Activated naive CD4-positive, alpha-beta T cell treated with anti-CD3 and anti-CD28 coated beads for 36 hours (primary cell): ENCODE measurements at regions of chr3 and their contacts with region 1.

Region 1: DNA sequence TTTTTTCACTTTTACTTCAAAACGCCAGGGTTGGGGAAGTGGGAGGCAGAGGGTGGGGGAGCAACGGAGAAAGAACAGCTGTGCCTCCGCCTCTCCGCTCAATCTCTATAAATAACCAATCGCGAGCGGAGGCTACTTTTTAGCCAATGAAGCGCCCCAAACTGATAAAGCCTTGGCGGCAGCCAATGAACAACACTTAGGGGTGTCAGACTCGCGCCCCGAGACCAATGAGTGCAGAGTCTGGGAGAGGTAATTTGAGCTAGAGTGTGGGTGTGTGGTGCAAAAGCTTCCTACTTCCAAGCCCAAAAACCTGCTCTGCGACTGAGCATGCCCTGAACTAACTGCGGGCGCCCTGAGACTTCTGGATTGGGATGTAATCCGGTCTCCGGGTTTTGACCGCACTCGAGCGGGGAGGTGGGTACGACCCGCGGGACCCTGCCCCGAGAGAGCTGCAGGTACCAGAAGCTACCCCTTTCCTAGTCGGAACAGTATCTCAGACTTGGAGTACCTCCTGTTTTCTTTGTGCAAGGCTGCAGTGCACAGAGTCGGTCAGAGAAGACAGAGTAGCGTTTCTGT is 800 bp upstream of the RAP2B start:
- DNase-seq: peak; percentile 96
- H3K4me3 Mint-ChIP-seq: peak overlapping the region; percentile 98
- H3K27ac Mint-ChIP-seq: peak overlapping the region; percentile 96
- H3K4me1 Mint-ChIP-seq: peaks cover 27% of the 10 kb centered on the region
- H3K27me3 Mint-ChIP-seq: no peaks in the 10 kb centered on the region

Region 2: DNA sequence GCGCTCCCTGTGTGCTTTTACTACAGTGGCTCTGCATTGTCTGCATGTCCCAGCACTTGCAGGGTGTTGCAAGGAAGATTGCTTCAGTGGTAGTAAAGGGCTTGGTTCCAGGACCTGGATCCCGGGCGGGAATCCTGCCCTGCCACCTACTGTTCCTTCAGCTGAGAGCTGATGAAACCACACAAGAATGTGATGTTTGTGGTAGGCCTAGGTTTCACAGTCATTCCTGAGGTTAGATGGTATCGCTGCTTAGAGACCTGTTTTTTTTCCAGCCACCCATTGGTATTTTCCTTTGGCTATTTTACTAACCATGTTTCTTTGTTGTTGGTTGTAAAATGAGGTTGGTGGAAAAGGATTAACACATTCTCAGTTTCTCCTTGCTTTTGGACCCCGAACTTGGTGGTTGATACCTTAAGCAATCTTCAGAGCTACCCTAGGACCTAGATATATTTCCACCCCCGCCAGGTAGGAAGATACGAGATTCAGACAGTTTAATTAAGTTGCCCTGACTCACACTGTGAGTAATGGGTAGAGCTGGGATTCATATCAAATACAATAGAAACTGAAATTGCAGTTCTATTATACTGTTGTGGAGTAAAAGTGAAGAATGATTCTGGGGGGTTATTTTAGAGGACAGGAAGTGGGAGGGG is 1856.0 kb before region 1 on chr3:
- CTCF ChIA-PET with region 1: no interaction called
- intact Hi-C with region 1: loop called (anchors 1 kb)
- DNase-seq: peak; percentile 37
- H3K4me3 Mint-ChIP-seq: no peak overlapping the region
- H3K27ac Mint-ChIP-seq: no peak overlapping the region
- H3K4me1 Mint-ChIP-seq: peaks cover 59% of the 10 kb centered on the region
- H3K27me3 Mint-ChIP-seq: peaks cover 18% of the 10 kb centered on the region

Region 3: DNA sequence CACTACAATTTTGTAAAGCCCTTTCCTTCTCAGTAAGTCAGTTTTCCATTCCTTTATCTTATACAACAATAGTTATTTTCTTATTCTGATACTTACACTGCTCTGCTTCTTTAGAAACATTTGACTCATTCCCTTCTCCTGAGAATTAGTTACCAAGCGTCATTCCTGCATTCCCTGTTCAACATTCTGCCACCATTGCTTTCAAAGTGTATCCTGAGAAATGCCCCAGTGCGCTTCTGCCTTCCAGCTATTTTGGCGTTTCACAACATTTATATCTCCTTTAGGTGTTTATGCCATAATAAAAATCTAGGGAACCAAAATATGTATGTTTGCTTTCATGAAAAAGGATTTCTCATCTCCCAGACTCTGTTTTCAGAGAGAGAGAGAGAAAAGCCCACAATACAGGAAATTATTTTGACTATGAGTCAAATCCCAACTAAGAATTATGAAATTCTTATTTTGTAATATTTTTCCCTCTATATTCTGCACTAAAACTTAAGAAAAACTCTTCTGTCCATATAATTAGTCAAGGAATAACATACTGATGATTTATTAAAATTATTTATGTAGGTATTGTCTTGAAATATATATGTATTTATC is 117.4 kb before region 1 on chr3:
- CTCF ChIA-PET with region 1: interaction called, 3 read pairs
- intact Hi-C with region 1: loop called (anchors 1 kb)
- DNase-seq: no peak
- H3K4me3 Mint-ChIP-seq: no peak overlapping the region
- H3K27ac Mint-ChIP-seq: no peak overlapping the region
- H3K4me1 Mint-ChIP-seq: peaks cover 3% of the 10 kb centered on the region
- H3K27me3 Mint-ChIP-seq: no peaks in the 10 kb centered on the region

Region 4: DNA sequence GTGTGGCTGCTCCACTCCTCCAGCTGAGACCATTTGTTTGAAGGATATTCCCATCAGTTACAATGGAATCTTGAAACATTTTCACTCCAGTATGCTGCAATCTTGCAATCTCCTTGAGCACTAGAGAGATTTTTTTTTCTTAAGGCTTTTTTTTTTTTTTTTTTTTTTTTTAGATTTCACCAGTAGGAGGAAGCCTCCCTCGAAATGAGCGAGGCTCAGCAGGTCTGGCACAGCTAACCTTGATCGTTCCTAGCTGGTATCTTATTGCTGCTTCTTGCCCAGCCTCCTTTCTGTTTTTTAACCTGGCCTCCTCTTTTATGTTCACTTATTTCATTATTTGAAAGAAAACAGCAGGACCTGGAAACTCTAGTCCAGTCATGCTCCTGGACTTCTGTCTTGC is 48.9 kb after region 1 on chr3:
- CTCF ChIA-PET with region 1: no interaction called
- intact Hi-C with region 1: loop called (anchors 2 kb)
- DNase-seq: peak; percentile 16
- H3K4me3 Mint-ChIP-seq: peak overlapping the region; percentile 36
- H3K27ac Mint-ChIP-seq: no peak overlapping the region
- H3K4me1 Mint-ChIP-seq: peaks cover 33% of the 10 kb centered on the region
- H3K27me3 Mint-ChIP-seq: no peaks in the 10 kb centered on the region

Region 5: DNA sequence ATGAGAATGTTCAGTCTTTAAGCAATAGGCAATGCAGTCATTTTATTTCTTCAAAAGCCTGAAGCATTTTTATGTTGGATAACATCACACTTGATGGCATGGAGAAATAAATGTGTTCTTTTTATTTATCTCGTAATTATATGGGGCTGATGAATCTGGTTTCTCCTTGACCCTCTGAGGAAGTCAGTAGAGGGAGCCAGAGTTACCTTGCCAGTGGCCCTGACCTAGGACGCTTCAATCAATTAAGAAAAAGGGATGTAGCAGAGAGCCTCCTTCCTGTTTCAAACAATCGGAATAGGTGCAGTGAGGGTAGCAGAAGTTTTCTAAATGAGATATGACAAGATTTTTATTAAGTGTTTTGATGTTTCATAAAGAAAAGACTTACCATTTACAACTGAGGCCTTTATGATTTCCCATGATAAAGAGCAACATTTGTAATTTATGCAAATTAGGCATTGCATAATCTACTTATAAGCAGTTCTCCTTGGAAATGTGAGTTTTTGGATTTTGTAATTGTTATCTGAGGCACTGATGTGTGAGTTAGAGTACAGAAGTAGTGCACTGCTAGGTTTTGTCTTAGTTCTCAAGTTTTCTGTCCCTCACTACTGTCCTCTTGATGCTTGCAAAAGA is 129.9 kb after region 1 on chr3:
- CTCF ChIA-PET with region 1: interaction called, 8 read pairs
- intact Hi-C with region 1: loop called (anchors 1 kb)
- DNase-seq: peak; percentile 20
- H3K4me3 Mint-ChIP-seq: no peak overlapping the region
- H3K27ac Mint-ChIP-seq: peak overlapping the region; percentile 26
- H3K4me1 Mint-ChIP-seq: peaks cover 40% of the 10 kb centered on the region
- H3K27me3 Mint-ChIP-seq: no peaks in the 10 kb centered on the region

Region 6: GRCh38 chr3:153621953-153622352 is 460.7 kb after region 1 on chr3:
- CTCF ChIA-PET with region 1: interaction called, 6 read pairs
- intact Hi-C with region 1: loop called (anchors 1 kb)
- DNase-seq: peak; percentile 33
- H3K4me3 Mint-ChIP-seq: no peak overlapping the region
- H3K27ac Mint-ChIP-seq: peak overlapping the region; percentile 78
- H3K4me1 Mint-ChIP-seq: peaks cover 57% of the 10 kb centered on the region
- H3K27me3 Mint-ChIP-seq: no peaks in the 10 kb centered on the region

Region 7: DNA sequence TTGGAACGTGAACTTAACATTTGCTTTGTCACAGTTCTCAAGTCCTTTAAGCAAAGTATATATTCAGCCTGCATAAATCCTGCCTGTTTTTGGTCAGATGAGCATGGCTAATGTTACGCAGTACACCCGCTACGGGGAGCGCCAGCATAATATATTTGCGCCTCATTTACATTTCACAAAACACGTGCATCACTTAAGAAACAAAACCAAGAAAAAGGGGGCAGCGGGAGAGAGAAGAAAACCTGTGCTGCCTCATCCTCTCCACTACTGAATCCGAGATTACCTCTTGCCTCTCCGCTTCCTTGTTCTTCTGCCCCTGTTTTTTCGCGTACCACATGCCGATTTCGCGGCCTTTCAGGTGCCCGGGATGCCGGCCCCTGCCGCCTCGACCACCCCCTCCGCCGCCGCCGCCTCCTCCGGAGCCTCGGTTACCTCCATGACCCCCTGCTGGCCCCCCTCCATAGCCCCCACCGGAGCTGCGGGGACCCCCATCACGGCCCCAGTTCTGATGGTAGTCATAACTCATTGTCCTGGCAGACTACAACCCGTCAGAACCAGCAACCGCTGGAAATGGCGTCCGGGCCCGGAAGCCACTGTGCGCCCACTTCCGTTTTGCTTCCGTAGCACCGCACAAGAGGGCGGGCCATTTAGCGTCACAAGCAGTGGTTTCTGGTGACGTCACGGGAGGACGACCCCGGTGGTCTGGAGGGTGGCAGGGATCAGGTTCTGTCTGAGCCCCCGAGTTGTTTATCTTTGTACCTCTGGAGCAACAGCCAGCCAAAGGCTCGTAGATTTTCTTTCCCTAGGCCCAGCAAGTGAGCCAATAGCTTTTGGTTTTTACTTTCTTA is 1162.9 kb after region 1 on chr3 and contains the start of gene DHX36:
- CTCF ChIA-PET with region 1: no interaction called
- intact Hi-C with region 1: loop called (anchors 1 kb)
- DNase-seq: peak; percentile 93
- H3K4me3 Mint-ChIP-seq: peak within 1 kb of the TSS; percentile 84
- H3K27ac Mint-ChIP-seq: peak within 1 kb of the TSS; percentile 96
- H3K4me1 Mint-ChIP-seq: peaks cover 31% of the 10 kb centered on the region
- H3K27me3 Mint-ChIP-seq: no peaks in the 10 kb centered on the region
- total RNA-seq, gene DHX36: 58.2 to 62.6 TPM